Activated CD8-positive, alpha-beta T cell treated with anti-CD3 and anti-CD28 coated beads, Interleukin-2, amount 10 ng/mL, durations not matched to agents 7 days and 5 days (primary cell): ENCODE measurements at regions of chr11 and their contacts with region 1.

Region 1: DNA sequence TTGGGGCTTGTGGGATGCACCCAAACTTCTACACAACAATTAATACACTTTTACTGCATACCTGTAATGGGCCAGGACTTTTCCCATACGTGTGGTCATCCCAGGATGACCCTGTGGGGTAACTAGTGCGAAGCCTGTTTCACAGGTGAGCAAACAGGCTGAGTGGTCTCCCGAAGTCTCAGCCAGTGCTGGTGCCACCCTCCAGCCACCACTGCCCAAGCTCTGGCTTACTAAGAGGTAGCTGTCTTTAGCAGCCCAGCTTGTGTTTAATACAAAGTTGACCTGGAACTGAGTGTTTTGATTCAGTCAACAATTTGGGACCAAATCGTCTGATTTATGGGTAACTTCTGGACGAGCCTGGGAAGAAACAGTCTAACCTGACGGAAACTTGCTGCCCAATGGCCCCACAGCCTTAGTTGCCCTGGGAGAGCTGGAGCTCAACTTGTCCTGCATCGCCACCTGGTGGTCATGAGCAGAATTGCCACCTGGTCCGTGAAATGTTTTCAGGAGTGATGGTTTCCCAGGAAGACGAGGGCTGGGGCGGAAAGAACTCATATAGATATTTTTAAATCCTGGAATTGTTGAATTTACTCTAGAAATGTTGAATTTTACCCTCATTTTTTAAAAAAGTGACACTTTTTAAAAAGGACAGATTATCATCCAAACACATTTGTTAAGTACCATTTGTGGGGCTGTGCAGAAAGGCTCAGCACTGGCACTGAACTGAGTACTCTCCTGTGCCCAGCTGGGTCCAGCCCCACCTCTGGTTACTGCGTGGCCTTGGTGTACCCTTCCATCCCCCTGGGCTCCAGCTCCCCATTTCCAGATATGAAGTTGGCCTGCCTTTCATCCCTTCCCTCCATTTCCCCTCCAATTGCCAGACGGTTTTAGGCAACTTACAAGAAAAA is 95.5 kb upstream of the PARVA start:
- DNase-seq: peak; percentile 82
- ATAC-seq: peak; percentile 66
- H3K4me3 Mint-ChIP-seq: no peak overlapping the region
- H3K27ac Mint-ChIP-seq: no peak overlapping the region
- H3K4me1 Mint-ChIP-seq: no peaks in the 10 kb centered on the region
- H3K27me3 Mint-ChIP-seq: peaks cover 3% of the 10 kb centered on the region

Region 2: DNA sequence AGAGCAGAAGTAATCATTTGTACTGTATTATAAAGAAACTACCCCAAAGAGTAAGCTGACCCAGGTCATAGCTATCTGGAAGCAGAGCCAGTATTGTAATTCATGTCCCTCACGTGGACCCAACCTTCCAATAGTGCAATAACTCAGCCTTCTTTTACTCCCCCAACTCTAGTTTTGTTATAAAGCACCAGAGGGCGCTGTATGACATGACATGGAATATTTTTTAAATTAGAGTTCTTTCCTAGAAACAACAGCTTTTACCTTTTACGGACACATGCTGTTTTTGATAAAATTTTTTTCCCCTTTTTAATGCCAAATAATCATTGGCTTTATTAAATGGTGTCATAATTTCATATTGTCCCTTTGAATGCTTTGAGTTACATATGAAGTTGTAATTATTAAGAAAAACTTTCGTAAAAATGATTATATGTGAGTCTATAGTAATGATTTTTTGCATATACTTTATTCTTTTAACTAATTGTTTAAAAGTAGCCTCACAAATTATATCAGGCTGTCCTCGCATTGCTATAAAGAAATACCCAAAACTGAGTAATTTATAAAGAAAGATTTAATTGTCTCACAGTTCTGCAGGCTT is 350.3 kb before region 1 on chr11:
- CTCF ChIA-PET with region 1: interaction called, 15 read pairs
- POLR2A ChIA-PET with region 1: no interaction called
- DNase-seq: peak; percentile 27
- ATAC-seq: peak; percentile 49
- H3K4me3 Mint-ChIP-seq: no peak overlapping the region
- H3K27ac Mint-ChIP-seq: no peak overlapping the region
- H3K4me1 Mint-ChIP-seq: peaks cover 6% of the 10 kb centered on the region
- H3K27me3 Mint-ChIP-seq: no peaks in the 10 kb centered on the region

Region 3: GRCh38 chr11:12043959-12044819 is 237.6 kb before region 1 on chr11:
- CTCF ChIA-PET with region 1: interaction called, 401 read pairs
- POLR2A ChIA-PET with region 1: interaction called, 4 read pairs
- DNase-seq: peak; percentile 75
- ATAC-seq: peak; percentile 81
- H3K4me3 Mint-ChIP-seq: no peak overlapping the region
- H3K27ac Mint-ChIP-seq: no peak overlapping the region
- H3K4me1 Mint-ChIP-seq: peaks cover 10% of the 10 kb centered on the region
- H3K27me3 Mint-ChIP-seq: peaks cover 6% of the 10 kb centered on the region

Region 4: GRCh38 chr11:12060385-12060985 is 221.3 kb before region 1 on chr11:
- CTCF ChIA-PET with region 1: interaction called, 401 read pairs
- POLR2A ChIA-PET with region 1: interaction called, 4 read pairs
- DNase-seq: no peak
- ATAC-seq: no peak
- H3K4me3 Mint-ChIP-seq: no peak overlapping the region
- H3K27ac Mint-ChIP-seq: no peak overlapping the region
- H3K4me1 Mint-ChIP-seq: peaks cover 15% of the 10 kb centered on the region
- H3K27me3 Mint-ChIP-seq: peaks cover 3% of the 10 kb centered on the region

Region 5: DNA sequence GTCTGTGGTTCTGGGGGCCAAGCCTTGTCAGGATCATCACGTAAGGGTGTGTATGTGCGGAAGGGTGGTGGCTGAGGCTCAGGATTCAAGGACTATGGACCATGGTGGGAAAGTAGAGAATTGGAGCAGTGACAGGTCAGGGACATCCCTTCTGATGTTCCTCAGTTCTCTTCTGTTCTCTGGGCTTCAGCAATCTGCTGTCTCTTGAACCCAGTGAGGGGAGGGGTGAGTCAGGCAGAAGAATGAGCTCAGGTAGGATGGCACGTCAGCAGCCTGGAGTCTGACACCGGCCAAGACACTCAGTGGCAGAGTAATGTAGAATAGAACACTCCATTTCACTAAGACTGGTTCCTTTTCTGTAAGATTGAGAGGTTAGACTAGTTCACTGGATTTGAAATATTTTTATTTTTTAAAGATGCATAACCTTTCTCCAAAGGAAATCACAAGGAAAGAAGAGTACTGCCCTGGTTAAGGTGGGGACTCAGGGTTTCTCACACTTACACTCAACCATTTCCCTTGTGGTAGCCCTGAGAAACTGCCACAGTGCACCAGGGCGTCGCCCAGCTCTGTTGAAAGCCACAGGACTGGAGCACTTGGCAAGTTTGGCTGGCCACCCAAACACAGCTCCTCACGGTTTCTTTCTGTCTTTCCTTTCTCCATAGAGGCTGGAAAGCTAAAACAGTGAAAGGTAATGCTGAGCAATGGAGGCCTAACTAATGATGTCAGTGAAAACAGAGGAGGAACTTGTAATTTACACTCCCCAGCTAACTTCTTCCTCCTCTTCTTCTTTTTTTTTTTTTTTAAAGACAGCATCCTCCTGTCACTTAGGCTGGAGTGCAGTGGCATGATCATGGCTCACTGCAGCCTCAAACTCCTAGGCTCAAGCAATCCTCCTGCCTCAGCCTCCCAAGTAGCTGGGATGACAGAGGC is 194.5 kb before region 1 on chr11:
- CTCF ChIA-PET with region 1: interaction called, 20 read pairs
- POLR2A ChIA-PET with region 1: no interaction called
- DNase-seq: peak; percentile 79
- ATAC-seq: peak; percentile 94
- H3K4me3 Mint-ChIP-seq: peak overlapping the region; percentile 67
- H3K27ac Mint-ChIP-seq: peak overlapping the region; percentile 90
- H3K4me1 Mint-ChIP-seq: peaks cover 79% of the 10 kb centered on the region
- H3K27me3 Mint-ChIP-seq: no peaks in the 10 kb centered on the region

Region 6: GRCh38 chr11:12263141-12263693 is 18.6 kb before region 1 on chr11:
- CTCF ChIA-PET with region 1: interaction called, 31 read pairs
- POLR2A ChIA-PET with region 1: no interaction called
- DNase-seq: no peak
- ATAC-seq: no peak
- H3K4me3 Mint-ChIP-seq: no peak overlapping the region
- H3K27ac Mint-ChIP-seq: no peak overlapping the region
- H3K4me1 Mint-ChIP-seq: no peaks in the 10 kb centered on the region
- H3K27me3 Mint-ChIP-seq: no peaks in the 10 kb centered on the region

Region 7: GRCh38 chr11:12269104-12269441 is 12.8 kb before region 1 on chr11:
- CTCF ChIA-PET with region 1: interaction called, 31 read pairs
- POLR2A ChIA-PET with region 1: no interaction called
- DNase-seq: no peak
- ATAC-seq: no peak
- H3K4me3 Mint-ChIP-seq: no peak overlapping the region
- H3K27ac Mint-ChIP-seq: no peak overlapping the region
- H3K4me1 Mint-ChIP-seq: no peaks in the 10 kb centered on the region
- H3K27me3 Mint-ChIP-seq: no peaks in the 10 kb centered on the region

Region 8: DNA sequence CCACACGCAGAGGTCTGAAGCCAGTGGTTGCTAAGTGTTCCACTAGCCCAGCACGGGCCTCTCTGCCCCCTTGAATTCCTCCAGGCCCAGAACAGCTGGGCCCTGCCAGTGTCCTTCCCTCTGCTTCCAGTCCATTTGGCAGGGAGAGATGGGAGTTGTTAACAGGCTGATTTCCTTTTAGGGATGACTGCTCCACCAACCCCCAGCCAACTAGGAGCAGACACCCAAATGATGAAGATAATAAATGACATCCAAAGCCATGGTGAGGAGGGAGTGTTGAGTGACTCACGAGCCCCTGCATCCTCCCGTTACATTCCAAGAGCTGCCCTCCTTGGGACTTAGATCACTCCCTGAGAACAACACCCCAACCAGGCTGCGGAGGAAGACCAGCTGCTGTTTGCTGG is 116.1 kb after region 1 on chr11:
- CTCF ChIA-PET with region 1: no interaction called
- POLR2A ChIA-PET with region 1: no interaction called
- DNase-seq: no peak
- ATAC-seq: no peak
- H3K4me3 Mint-ChIP-seq: no peak overlapping the region
- H3K27ac Mint-ChIP-seq: no peak overlapping the region
- H3K4me1 Mint-ChIP-seq: no peaks in the 10 kb centered on the region
- H3K27me3 Mint-ChIP-seq: no peaks in the 10 kb centered on the region